ENCODE measurements at regions of chr12 and their contacts with region 1.

Region 1: DNA sequence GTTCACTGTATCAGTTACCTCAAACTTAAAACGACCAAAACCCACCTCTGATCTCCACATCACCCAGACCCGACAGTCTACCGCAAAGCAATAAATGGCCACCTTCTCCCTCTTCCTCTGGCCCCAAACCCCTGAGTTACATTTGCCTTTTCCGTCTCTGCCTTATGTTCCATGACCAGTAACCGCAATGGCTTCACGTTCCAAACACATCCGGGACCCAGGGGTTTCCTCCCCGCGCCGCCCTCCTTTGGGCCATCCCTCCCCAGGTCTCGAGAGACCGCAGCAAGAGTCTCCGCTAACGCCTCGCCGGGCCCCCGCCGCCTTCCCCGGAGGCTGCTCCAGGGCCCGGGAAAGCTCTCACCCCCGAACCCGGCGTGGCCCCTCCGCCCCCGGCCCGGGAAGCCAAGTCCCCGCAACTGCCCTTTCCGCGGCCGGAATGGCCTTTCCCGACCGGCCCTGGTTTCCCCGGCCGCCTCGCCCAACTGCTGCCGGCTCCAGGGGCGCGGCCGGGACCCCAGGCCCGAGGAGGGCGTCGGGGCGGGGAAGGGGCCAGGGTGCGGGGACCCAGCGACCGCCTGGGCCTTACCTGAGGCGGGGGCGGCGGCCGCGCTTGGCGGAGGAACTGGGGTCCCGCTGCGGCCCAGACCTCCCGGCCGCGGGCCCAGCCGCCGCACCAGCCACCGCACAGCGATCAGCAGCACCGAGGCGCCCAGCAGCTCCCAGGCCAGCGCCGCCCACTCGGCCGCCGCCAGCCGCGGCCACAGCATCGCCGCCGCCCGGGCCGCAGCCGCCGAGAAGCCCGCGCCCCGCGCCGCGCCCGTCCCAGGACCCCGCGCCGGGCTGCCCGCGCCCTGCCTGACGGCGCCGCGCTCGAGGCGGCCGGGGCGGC is at the start of gene ANKLE2:
- DNase-seq: peak; percentile 68 to 86 (median 70)
- H3K4me3 ChIP-seq: peak within 1 kb of the TSS; percentile 75 to 81
- H3K4me3 Mint-ChIP-seq: peak within 1 kb of the TSS; percentile 82 to 99 (median 93)
- H3K27ac ChIP-seq: peak within 1 kb of the TSS; percentile 89
- H3K27ac Mint-ChIP-seq: peak within 1 kb of the TSS; percentile 95 to 99 (median 97)
- H3K4me1 ChIP-seq: peaks cover 24% of the 10 kb centered on the region
- H3K4me1 Mint-ChIP-seq: peaks cover 14 to 27% (median 22%) of the 10 kb centered on the region in 4 donors
- H3K27me3 ChIP-seq: no peaks in the 10 kb centered on the region
- H3K27me3 Mint-ChIP-seq: no peaks in the 10 kb centered on the region
- total RNA-seq, gene ANKLE2: 95.6 to 101 TPM

Region 2: GRCh38 chr12:132687208-132688164 is 73.8 kb before region 1 on chr12 and contains the starts of genes POLE and PXMP2:
- CTCF ChIA-PET with region 1: no interaction called
- POLR2A ChIA-PET with region 1: no interaction called
- intact Hi-C with region 1: loop called (anchors 2 kb)
- DNase-seq: peak; percentile 91 to 93 (median 91)
- H3K4me3 ChIP-seq: peak within 1 kb of the TSS in 1 of 2 donors; percentile 45
- H3K4me3 Mint-ChIP-seq: peak within 1 kb of the TSS; percentile 78 to 90 (median 86)
- H3K27ac ChIP-seq: peak within 1 kb of the TSS; percentile 26
- H3K27ac Mint-ChIP-seq: peak within 1 kb of the TSS in 4 of 7 donors; percentile 47 to 74 (median 62)
- H3K4me1 ChIP-seq: peaks cover 13% of the 10 kb centered on the region
- H3K4me1 Mint-ChIP-seq: peaks cover 15 to 36% (median 20%) of the 10 kb centered on the region in 4 donors
- H3K27me3 ChIP-seq: no peaks in the 10 kb centered on the region
- H3K27me3 Mint-ChIP-seq: no peaks in the 10 kb centered on the region
- total RNA-seq, gene POLE: 69.5 to 75.4 TPM
- total RNA-seq, gene PXMP2: 4.2 to 7.2 TPM

Region 3: DNA sequence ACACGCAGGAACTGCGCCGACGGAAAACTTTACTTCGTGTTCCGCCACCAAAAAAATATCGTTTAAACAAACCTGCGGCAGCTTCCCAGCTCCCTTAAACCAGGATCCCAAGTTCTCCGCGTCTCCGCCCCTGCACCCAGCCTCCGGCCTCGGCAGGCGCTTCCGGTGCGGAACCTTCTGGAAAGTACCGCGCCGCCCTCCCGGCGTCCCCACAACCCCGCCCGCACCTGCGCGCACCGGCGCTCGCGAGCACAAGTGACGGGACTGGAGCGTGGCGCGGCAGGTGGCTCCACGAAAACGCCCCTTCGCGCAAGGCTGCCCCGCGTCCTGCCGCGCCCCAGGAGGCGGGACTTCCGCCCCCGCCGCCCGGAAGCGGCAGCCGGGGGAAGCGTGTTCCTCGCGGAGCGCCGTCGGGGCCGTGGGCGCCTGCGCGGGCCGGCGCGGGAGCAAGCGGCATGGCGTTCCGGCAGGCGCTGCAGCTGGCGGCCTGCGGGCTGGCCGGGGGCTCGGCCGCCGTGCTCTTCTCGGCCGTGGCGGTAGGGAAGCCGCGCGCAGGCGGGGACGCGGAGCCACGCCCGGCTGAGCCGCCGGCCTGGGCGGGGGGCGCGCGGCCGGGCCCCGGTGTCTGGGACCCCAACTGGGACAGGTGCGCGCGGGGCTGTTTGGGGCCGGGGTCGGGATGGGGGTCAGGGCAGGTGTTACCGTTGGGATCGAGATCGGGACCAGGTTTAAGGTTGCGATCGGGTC is 50.7 kb before region 1 on chr12 and contains the start of gene PGAM5:
- CTCF ChIA-PET with region 1: no interaction called
- POLR2A ChIA-PET with region 1: interaction called, 9 read pairs
- intact Hi-C with region 1: loop called (anchors 1 kb)
- DNase-seq: peak; percentile 95 to 97 (median 96)
- H3K4me3 ChIP-seq: peak within 1 kb of the TSS; percentile 48 to 70
- H3K4me3 Mint-ChIP-seq: peak within 1 kb of the TSS; percentile 88 to 90 (median 90)
- H3K27ac ChIP-seq: peak within 1 kb of the TSS; percentile 91
- H3K27ac Mint-ChIP-seq: peak within 1 kb of the TSS; percentile 92 to 95 (median 94)
- H3K4me1 ChIP-seq: peaks cover 28% of the 10 kb centered on the region
- H3K4me1 Mint-ChIP-seq: peaks cover 8 to 33% (median 19%) of the 10 kb centered on the region in 4 donors
- H3K27me3 ChIP-seq: no peaks in the 10 kb centered on the region
- H3K27me3 Mint-ChIP-seq: no peaks in the 10 kb centered on the region
- total RNA-seq, gene PGAM5: 23.8 to 28.1 TPM

Region 4: DNA sequence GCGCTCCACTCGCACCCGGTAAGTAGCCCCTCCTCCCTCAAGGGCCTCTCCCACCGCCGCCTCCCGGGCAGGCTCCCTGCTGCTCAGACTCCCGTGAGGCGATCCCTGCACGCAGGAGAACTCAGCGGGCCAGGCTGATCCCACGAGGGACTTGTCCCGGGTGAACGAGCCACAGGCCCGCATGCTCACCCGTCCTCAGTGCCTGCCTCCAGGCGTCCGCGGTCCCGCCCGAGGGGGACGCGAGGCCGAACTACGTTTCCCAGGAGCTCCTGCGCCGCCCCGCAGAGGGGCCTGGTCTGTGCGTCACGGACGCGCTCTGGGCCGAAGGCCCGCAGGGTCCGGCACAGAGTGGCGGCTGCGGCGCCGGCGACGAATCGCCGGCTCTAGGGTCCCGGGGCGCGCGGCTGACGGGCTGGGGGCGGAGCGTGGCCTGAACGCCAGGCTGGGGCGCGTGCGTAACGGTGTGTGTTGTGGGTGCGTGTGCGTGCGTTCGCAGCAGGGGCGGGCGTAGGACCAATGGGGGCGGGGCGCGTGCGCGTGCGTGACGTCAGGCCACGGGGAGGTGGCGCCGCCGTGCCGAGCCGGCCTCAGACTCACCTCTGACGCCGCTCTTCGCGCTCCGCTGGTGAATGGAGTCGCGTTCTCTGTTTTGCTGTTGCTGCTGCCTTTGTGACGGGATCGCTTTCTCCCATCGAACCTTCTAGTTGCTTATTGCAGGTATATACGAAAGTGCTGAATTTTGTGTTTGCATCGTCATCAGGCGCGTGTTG is 368.9 kb after region 1 on chr12 and contains the starts of genes ZNF10 and ZNF891:
- CTCF ChIA-PET with region 1: no interaction called
- POLR2A ChIA-PET with region 1: no interaction called
- intact Hi-C with region 1: loop called (anchors 2 kb)
- DNase-seq: peak; percentile 95 to 98 (median 98)
- H3K4me3 ChIP-seq: peak within 1 kb of the TSS; percentile 59 to 87
- H3K4me3 Mint-ChIP-seq: peak within 1 kb of the TSS; percentile 87 to 99 (median 95)
- H3K27ac ChIP-seq: peak within 1 kb of the TSS; percentile 98
- H3K27ac Mint-ChIP-seq: peak within 1 kb of the TSS; percentile 92 to 100 (median 99)
- H3K4me1 ChIP-seq: peaks cover 10% of the 10 kb centered on the region
- H3K4me1 Mint-ChIP-seq: peaks cover 11 to 25% (median 19%) of the 10 kb centered on the region in 4 donors
- H3K27me3 ChIP-seq: no peaks in the 10 kb centered on the region
- H3K27me3 Mint-ChIP-seq: no peaks in the 10 kb centered on the region
- total RNA-seq, gene ZNF10: 17.4 to 19.6 TPM
- total RNA-seq, gene ZNF891: 6.2 to 7.3 TPM

Measured in CD4-positive, alpha-beta memory T cell (primary cell).